PC-3 (cell line): ENCODE measurements at regions of chr1 and their contacts with region 1.

Region 1: GRCh38 chr1:217275655-217276398 is 355.1 kb downstream of the GPATCH2 start:
- DNase-seq: peak; percentile 96
- ATAC-seq: peak; percentile 67
- H3K4me3 ChIP-seq: peak overlapping the region; percentile 50
- H3K27ac ChIP-seq: peak overlapping the region; percentile 92
- H3K4me1 ChIP-seq: peaks cover 48% of the 10 kb centered on the region
- H3K27me3 ChIP-seq: no peaks in the 10 kb centered on the region
- CTCF ChIP-seq: no peak

Region 2: GRCh38 chr1:217333939-217334338 is 58.1 kb after region 1 on chr1:
- CTCF ChIA-PET with region 1: no interaction called
- POLR2A ChIA-PET with region 1: no interaction called
- intact Hi-C with region 1: loop called (anchors 1 kb)
- DNase-seq: peak; percentile 89
- ATAC-seq: peak; percentile 77
- H3K4me3 ChIP-seq: no peak overlapping the region
- H3K27ac ChIP-seq: no peak overlapping the region
- H3K4me1 ChIP-seq: no peaks in the 10 kb centered on the region
- H3K27me3 ChIP-seq: peaks cover 5% of the 10 kb centered on the region; the same call in 1 of the 2 replicates
- CTCF ChIP-seq: peak; percentile 98